ENCODE measurements at regions of chr6 and their contacts with region 1.

Region 1: GRCh38 chr6:154276810-154277628 is 79.6 kb downstream of the IPCEF1 start:
- DNase-seq: no peak

Region 2: DNA sequence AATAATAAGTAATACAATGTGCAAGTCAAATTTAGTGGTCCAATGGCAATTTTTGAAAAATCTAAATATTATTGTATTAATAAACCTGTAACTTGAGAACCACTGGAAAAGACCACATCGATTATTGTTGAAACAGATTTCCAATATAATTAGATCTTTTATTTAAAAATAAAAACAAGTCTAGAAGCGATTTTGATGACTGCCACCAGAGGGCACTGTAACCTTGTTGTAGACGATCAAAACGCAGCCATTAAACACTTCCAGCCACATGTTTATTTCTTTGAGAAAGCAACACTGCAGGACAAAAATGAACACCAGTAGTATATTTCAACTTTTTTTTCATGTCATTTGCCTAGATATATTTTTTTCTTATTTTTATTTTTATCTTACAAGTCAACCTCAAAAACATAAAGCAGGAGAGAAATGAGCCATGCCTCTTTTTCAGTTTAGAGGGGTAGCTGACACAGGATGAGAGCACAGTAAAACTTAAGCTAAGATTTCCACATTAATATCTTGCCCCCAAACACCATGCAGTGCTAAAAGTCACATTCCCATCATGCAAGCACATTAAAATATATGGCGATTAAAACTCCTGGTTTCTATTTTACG is 122.6 kb before region 1 on chr6:
- intact Hi-C with region 1: loop called (anchors 5 kb)
- DNase-seq: peak in 37 of 42 donors; percentile 20 to 89 (median 64)

Measured in head of caudate nucleus (tissue), 42 donors.